ENCODE measurements at regions of chr2 and their contacts with region 1.

Region 1: DNA sequence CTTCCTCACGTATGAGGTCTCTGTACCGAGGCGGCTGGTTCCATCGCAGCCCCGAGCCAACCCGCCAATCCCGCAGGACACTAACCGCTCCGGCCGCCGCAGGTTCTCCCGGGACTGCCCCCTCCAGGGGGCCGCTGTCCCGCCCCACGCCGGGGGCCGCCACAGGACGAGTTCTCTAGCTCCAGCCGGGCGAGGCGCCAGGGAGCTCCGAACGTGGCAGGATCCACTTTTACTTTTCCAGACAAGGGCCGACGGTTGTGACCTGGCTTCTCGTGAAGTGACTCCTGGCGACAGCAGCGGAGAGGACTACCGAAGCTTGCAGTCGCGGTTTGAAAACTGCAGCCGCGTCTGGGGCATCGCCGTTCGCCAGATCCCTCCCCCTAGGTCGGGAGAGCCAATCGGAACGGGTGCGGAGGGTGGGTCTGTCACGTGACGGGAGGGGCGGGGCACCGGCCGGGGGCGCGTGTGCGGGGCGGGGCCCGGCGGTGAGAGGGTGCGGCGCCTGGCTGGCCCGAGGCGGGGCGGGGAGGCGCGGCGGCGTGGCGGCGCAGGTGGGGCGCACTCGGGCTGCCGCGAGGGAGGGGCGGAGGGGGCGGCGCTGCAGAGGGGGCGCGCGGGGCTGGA is at the start of gene STK17B:
- DNase-seq: peak; percentile 93
- H3K4me3 Mint-ChIP-seq: peak within 1 kb of the TSS; percentile 94
- H3K27ac Mint-ChIP-seq: peak within 1 kb of the TSS; percentile 92
- H3K4me1 Mint-ChIP-seq: peaks cover 50% of the 10 kb centered on the region
- H3K27me3 Mint-ChIP-seq: no peaks in the 10 kb centered on the region
- total RNA-seq, gene STK17B: 148 and 164 TPM in 2 replicates

Region 2: DNA sequence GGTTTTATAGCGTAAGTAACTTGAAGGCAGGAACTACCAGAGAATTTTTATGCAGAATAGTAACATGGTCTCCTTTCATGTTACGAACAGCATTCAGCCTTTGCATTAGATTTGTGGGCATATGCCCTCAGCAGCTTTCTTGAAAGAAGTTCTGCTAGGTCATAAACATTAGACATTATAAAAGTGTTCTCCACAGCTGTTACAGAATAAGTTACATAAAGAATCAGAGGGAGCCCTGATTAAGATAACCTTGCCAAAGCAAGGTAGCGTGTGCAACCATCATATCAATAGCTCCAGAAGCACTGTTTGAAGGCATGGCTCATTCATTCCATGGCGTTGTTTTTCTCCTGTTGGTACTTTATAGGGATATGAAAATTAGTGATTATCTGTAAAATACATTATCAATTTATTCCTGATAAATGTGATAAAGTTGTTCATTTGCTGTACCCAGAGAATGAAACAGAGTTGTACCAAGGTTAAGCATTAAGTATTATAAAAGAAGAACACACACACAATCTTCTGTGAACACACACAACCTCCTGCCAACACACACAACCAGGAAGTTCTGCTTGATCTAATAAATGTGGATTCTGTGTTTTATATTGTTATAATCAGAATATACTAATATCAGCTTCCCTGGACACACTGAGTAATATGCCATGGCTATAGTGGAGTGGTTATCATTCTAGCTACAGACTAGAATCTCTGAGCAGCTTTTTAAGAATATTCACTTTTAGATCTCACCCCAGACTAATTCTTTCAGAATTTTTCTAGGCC is 801.0 kb before region 1 on chr2:
- intact Hi-C with region 1: no loop called
- DNase-seq: no peak
- H3K4me3 Mint-ChIP-seq: no peak overlapping the region
- H3K27ac Mint-ChIP-seq: no peak overlapping the region
- H3K4me1 Mint-ChIP-seq: peaks cover 4% of the 10 kb centered on the region
- H3K27me3 Mint-ChIP-seq: no peaks in the 10 kb centered on the region

Region 3: GRCh38 chr2:195533771-195534642 is 637.4 kb before region 1 on chr2:
- intact Hi-C with region 1: loop called (anchors 2 kb)
- DNase-seq: peak; percentile 60
- H3K4me3 Mint-ChIP-seq: peak overlapping the region; percentile 82
- H3K27ac Mint-ChIP-seq: peak overlapping the region; percentile 96
- H3K4me1 Mint-ChIP-seq: peaks cover 86% of the 10 kb centered on the region
- H3K27me3 Mint-ChIP-seq: no peaks in the 10 kb centered on the region

Region 4: DNA sequence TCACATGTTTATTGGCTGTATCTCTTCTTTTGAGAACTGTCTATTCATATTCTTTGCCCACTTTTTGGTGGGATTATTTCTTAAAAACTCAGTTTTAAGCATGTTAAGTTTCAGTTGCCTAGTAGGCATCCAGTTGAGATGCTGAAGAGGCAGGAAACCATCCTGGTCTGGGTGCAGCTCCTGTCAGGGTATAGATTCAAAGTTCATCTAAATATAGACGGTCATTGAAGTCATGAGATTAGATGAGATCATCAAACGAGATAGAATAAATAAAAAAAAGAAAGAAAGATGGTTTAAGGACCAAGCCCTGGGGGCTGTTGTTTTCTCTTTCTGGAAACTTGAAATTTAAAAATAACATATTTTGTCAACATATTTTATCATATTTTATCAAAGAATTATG is 93.5 kb before region 1 on chr2:
- intact Hi-C with region 1: loop called (anchors 2 kb)
- DNase-seq: no peak
- H3K4me3 Mint-ChIP-seq: no peak overlapping the region
- H3K27ac Mint-ChIP-seq: no peak overlapping the region
- H3K4me1 Mint-ChIP-seq: peaks cover 19% of the 10 kb centered on the region
- H3K27me3 Mint-ChIP-seq: no peaks in the 10 kb centered on the region

Region 5: DNA sequence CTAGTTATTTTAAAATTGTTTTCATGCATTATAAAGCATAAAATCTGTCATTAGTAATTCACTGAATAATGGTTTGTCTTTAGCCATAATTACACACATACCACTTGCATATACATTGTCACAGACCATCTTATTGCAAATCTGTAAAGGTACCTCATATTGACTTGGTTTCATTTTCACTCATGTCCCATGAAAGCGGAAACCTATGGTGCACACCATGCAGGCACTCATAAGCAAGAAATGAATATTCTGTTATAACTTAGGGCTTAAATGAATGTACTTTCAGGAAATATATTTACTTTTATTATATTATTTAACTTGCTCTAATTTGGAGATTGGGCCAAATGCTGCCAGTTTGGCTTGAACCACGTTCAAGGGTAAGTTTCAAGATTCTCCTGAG is 29.2 kb after region 1 on chr2:
- intact Hi-C with region 1: loop called (anchors 1 kb)
- DNase-seq: peak; percentile 41
- H3K4me3 Mint-ChIP-seq: peak overlapping the region; percentile 54
- H3K27ac Mint-ChIP-seq: peak overlapping the region; percentile 87
- H3K4me1 Mint-ChIP-seq: peaks cover 49% of the 10 kb centered on the region
- H3K27me3 Mint-ChIP-seq: no peaks in the 10 kb centered on the region

Region 6: GRCh38 chr2:196239622-196240587 is 68.5 kb after region 1 on chr2:
- intact Hi-C with region 1: loop called (anchors 1 kb)
- DNase-seq: peak; percentile 83
- H3K4me3 Mint-ChIP-seq: peak overlapping the region; percentile 60
- H3K27ac Mint-ChIP-seq: peak overlapping the region; percentile 97
- H3K4me1 Mint-ChIP-seq: peaks cover 76% of the 10 kb centered on the region
- H3K27me3 Mint-ChIP-seq: no peaks in the 10 kb centered on the region

Region 7: GRCh38 chr2:197057959-197058358 is 886.6 kb after region 1 on chr2:
- intact Hi-C with region 1: no loop called
- DNase-seq: no peak
- H3K4me3 Mint-ChIP-seq: no peak overlapping the region
- H3K27ac Mint-ChIP-seq: no peak overlapping the region
- H3K4me1 Mint-ChIP-seq: peaks cover 21% of the 10 kb centered on the region
- H3K27me3 Mint-ChIP-seq: no peaks in the 10 kb centered on the region

Region 8: GRCh38 chr2:197191177-197191939 is 1020.0 kb after region 1 on chr2:
- intact Hi-C with region 1: loop called (anchors 10 kb)
- DNase-seq: no peak
- H3K4me3 Mint-ChIP-seq: peak overlapping the region; percentile 0
- H3K27ac Mint-ChIP-seq: peak overlapping the region; percentile 47
- H3K4me1 Mint-ChIP-seq: peaks cover 83% of the 10 kb centered on the region
- H3K27me3 Mint-ChIP-seq: no peaks in the 10 kb centered on the region